Activated T-helper 1 cell treated with anti-CD3 and anti-CD28 coated beads, Interleukin-12 subunit alpha, Interleukin-12 subunit beta, Interleukin-2, Interleukin-4 antibody, amounts not matched to agents 30 ng/mL and 10 ng/mL and 1 ng/mL, durations not matched to agents 14 hours and 24 hours and 36 hours (primary cell): ENCODE measurements at regions of chr17 and their contacts with region 1.

Region 1: GRCh38 chr17:47742319-47743181 is 9.5 kb downstream of the TBX21 start:
- DNase-seq: no peak
- H3K4me3 Mint-ChIP-seq: no peak overlapping the region
- H3K27ac Mint-ChIP-seq: peak overlapping the region; percentile 43
- H3K4me1 Mint-ChIP-seq: peaks cover 24% of the 10 kb centered on the region
- H3K27me3 Mint-ChIP-seq: no peaks in the 10 kb centered on the region

Region 2: GRCh38 chr17:47789611-47790561 is 47.3 kb after region 1 on chr17:
- intact Hi-C with region 1: loop called (anchors 5 kb)
- DNase-seq: peak; percentile 44
- H3K4me3 Mint-ChIP-seq: peak overlapping the region; percentile 64
- H3K27ac Mint-ChIP-seq: no peak overlapping the region
- H3K4me1 Mint-ChIP-seq: no peaks in the 10 kb centered on the region
- H3K27me3 Mint-ChIP-seq: peaks cover 70% of the 10 kb centered on the region